Adrenal gland (tissue), 19 donors: ENCODE measurements at regions of chr12 and their contacts with region 1.

Region 1: DNA sequence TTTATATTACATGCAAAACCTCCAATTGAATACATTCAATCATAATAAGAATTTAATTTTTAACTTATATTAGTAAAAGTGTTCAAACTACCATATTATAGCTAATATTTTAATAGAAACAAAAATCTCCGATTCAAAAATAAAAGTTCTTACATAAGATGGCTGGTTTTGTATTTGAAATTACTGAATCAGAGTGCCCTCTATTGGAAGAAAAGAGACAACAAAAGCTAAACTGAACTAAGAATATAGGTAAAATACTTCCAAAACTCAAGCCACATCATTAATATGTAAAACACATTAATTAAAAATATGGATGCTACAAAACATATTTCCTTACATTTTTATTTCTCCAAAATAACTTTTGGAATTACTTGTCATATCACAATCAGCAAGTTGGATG is 120.3 kb downstream of the GARIN6 start:
- DNase-seq: no peak
- H3K4me3 ChIP-seq: peak overlapping the region in 2 of 4 donors; percentile 30 to 53
- H3K27ac ChIP-seq: no peak overlapping the region
- H3K4me1 ChIP-seq: peaks cover 0 to 19% of the 10 kb centered on the region in 2 donors
- H3K27me3 ChIP-seq: no peaks in the 10 kb centered on the region
- CTCF ChIP-seq: peak; percentile 36 to 66 (median 50)
- POLR2A ChIP-seq: no peak

Region 2: GRCh38 chr12:99043319-99043914 is 724.4 kb before region 1 on chr12:
- intact Hi-C with region 1: loop called in 1 of 2 experiments (anchors 5 kb)
- DNase-seq: peak; percentile 50 to 87 (median 73)
- H3K4me3 ChIP-seq: no peak overlapping the region
- H3K27ac ChIP-seq: no peak overlapping the region
- H3K4me1 ChIP-seq: no peaks in the 10 kb centered on the region
- H3K27me3 ChIP-seq: no peaks in the 10 kb centered on the region
- CTCF ChIP-seq: peak; percentile 72 to 95 (median 83)
- POLR2A ChIP-seq: no peak

Region 3: DNA sequence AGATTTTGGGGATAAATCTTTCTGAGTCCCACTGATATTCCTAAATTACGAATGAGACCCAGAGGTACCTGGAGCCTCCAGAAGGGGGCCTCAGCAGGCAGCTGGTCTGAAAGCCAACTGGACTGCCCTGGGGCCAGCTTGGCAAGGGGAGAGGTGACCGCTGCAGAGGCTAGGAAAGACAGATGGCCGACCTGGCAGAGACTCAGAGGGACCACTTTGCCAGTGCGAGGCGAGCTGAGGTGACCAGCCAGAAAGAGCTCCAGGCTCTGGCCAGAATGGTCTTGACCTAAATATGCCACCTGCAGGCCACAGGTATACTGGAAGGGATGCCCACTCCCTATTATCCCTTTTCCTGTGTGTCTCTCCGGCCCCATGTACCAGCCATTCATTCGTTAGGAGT is 377.1 kb before region 1 on chr12:
- intact Hi-C with region 1: loop called in 1 of 2 experiments (anchors 10 kb)
- DNase-seq: peak in 4 of 7 donors; percentile 4 to 28 (median 13)
- H3K4me3 ChIP-seq: no peak overlapping the region
- H3K27ac ChIP-seq: no peak overlapping the region
- H3K4me1 ChIP-seq: no peaks in the 10 kb centered on the region
- H3K27me3 ChIP-seq: no peaks in the 10 kb centered on the region
- CTCF ChIP-seq: peak in 3 of 6 experiments; percentile 21 to 31 (median 21)
- POLR2A ChIP-seq: no peak